Activated CD4-positive, alpha-beta memory T cell treated with anti-CD3 and anti-CD28 coated beads for 36 hours (primary cell): ENCODE measurements at regions of chr6 and their contacts with region 1.

Region 1: DNA sequence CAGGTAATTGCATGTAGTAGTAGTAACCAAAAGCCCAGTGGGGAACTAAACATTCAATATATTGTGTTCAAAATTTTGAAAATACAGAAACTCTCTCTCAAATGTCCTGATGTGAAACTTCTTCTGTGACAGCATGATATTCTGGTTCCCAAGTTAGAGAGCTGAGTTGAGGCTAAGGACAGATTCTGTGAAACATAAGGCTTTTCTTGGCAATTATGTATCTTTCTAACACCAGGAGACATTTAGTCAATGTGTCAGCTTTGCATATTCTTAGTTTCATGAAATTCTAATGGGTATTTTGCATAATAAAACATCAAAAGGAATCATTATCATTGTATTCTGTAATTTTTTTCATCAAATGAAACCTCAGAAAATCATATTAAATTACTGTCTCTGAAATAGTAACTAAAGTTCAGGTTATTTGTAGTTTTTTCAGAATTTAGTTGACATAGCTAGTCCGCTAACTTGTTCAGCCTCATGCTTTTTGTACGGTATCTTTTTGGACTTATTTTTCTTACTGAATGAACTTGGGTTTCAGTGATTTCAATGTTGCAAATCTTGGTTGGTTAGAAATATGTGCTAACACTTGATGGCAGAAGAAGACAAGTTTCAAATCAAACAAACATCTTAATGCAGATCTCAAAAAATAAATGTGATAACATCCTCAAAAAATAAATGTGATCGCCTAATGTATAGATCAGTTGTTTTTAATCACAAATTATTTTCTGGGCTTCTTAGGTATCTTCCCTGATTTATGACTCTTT is 70.4 kb downstream of the AKAP7 start:
- DNase-seq: no peak
- H3K4me3 Mint-ChIP-seq: no peak overlapping the region
- H3K27ac Mint-ChIP-seq: no peak overlapping the region
- H3K4me1 Mint-ChIP-seq: peaks cover 58% of the 10 kb centered on the region
- H3K27me3 Mint-ChIP-seq: no peaks in the 10 kb centered on the region

Region 2: DNA sequence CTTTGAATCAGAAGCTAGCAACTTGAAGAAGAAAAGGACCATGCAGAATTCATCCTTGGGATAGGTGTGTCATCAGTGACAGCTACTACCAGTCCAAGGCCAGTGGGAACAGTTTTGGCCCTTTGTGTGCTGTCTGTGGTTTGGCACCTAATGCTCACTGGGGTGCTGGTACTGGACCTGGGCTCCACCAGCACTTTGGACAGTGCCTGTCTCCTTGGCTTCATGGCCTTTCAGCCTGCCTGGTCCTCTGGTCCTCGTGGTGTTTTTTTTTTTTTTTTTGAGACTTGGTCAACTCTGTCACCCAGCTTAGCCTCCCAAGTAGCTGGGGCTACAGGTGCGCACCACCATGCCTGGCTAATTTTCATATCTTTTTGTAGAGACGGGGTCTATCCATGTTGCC is 14.1 kb before region 1 on chr6:
- CTCF ChIA-PET with region 1: no interaction called
- POLR2A ChIA-PET with region 1: no interaction called
- intact Hi-C with region 1: no loop called
- DNase-seq: no peak
- H3K4me3 Mint-ChIP-seq: no peak overlapping the region
- H3K27ac Mint-ChIP-seq: no peak overlapping the region
- H3K4me1 Mint-ChIP-seq: no peaks in the 10 kb centered on the region
- H3K27me3 Mint-ChIP-seq: no peaks in the 10 kb centered on the region

Region 3: DNA sequence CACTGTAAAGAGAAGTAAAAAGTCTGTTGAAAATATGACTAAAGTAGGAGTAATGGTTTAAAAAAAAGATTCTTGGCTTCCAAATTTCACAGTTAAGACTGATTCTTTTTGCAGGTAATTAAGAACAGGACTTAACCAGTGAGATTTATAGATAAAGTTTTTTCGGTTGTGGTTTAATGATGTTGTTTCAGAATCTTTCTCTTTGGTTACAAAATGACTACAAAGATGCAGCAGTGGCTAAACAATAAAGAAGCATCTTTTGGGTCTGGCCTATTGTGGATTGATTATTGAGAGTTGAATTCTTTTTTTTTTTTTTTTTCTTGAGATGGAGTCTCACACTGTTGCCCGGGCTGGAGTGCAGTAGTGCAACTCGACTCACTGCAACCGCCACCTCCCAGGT is 39.3 kb after region 1 on chr6:
- CTCF ChIA-PET with region 1: no interaction called
- POLR2A ChIA-PET with region 1: interaction called, 3 read pairs
- intact Hi-C with region 1: loop called (anchors 5 kb)
- DNase-seq: no peak
- H3K4me3 Mint-ChIP-seq: no peak overlapping the region
- H3K27ac Mint-ChIP-seq: peak overlapping the region; percentile 5
- H3K4me1 Mint-ChIP-seq: peaks cover 27% of the 10 kb centered on the region
- H3K27me3 Mint-ChIP-seq: no peaks in the 10 kb centered on the region